PC-3 (cell line): ENCODE measurements at regions of chr7 and their contacts with region 1.

Region 1: GRCh38 chr7:954330-955238 is at the start of gene ADAP1:
- DNase-seq: peak; percentile 62
- ATAC-seq: peak; percentile 56
- H3K4me3 ChIP-seq: peak within 1 kb of the TSS; percentile 74
- H3K27ac ChIP-seq: no peak within 1 kb of the TSS
- H3K4me1 ChIP-seq: peaks cover 12% of the 10 kb centered on the region
- H3K27me3 ChIP-seq: no peaks in the 10 kb centered on the region
- CTCF ChIP-seq: no peak
- total RNA-seq, gene ADAP1: 31.2 and 36.4 TPM in 2 replicates

Region 2: GRCh38 chr7:964401-965231 is 10.0 kb after region 1 on chr7:
- CTCF ChIA-PET with region 1: no interaction called
- POLR2A ChIA-PET with region 1: interaction called, 25 read pairs
- intact Hi-C with region 1: no loop called
- DNase-seq: peak; percentile 49
- ATAC-seq: peak; percentile 53
- H3K4me3 ChIP-seq: no peak overlapping the region
- H3K27ac ChIP-seq: no peak overlapping the region
- H3K4me1 ChIP-seq: no peaks in the 10 kb centered on the region
- H3K27me3 ChIP-seq: no peaks in the 10 kb centered on the region
- CTCF ChIP-seq: peak; percentile 54